SK-N-SH (cell line): ENCODE measurements at regions of chr11 and their contacts with region 1.

Region 1: DNA sequence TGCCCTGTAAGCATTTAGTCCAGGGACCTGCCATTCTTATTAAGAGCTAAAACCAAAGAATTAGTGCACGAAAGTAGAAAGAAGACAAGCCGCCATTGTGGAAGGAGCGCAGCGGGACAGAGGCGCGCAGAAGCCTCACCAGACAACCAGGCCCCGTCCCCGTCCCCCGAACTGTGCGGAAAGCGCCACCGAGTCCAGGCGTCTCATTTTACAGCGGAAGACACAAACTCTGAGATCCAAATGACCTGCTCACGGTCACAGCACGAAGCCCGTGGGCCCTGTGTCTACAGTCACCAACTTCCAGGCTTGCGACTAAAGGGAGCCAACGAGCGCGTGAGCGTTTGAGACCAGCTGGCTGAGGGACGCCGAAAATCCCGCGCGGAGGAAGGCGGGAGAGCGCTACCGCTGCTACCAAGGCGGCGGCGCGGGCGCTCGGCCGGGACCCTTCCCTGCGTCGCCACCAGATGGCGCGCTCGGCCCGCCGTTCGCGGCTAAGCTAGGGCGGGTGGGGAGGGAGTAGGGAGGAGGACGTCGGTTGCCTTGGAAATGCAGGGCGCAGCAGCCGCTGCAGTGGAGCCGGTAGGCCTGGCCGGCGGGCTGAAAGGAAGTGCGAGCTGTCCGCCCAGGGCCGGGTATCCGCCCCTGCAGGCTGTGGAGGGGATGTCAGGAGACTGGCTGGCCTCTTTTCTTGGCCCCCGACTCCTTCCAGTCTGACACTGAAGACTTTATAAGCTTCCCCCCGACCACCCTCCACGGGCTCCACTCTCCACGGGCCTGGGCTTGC is 434 bp upstream of the CCDC83 start:
- DNase-seq: peak; percentile 95
- H3K4me3 ChIP-seq: peak overlapping the region; percentile 53 to 64
- H3K27ac ChIP-seq: peak overlapping the region; percentile 57 to 76
- H3K4me1 ChIP-seq: peaks cover 0 to 8% of the 10 kb centered on the region in 2 experiments; a peak in 1 of 4 replicates
- H3K27me3 ChIP-seq: no peaks in the 10 kb centered on the region
- CTCF ChIP-seq: peak; percentile 61
- EP300 ChIP-seq: no peak
- RAD21 ChIP-seq: peak; percentile 88

Region 2: GRCh38 chr11:85843929-85844328 is 10.8 kb before region 1 on chr11:
- CTCF ChIA-PET with region 1: interaction called, 11 read pairs
- POLR2A ChIA-PET with region 1: no interaction called
- DNase-seq: no peak
- H3K4me3 ChIP-seq: no peak overlapping the region
- H3K27ac ChIP-seq: no peak overlapping the region
- H3K4me1 ChIP-seq: peaks cover 5 to 7% of the 10 kb centered on the region in 2 experiments; a peak in 1 of 4 replicates
- H3K27me3 ChIP-seq: no peaks in the 10 kb centered on the region
- CTCF ChIP-seq: no peak
- EP300 ChIP-seq: no peak
- RAD21 ChIP-seq: no peak

Region 3: DNA sequence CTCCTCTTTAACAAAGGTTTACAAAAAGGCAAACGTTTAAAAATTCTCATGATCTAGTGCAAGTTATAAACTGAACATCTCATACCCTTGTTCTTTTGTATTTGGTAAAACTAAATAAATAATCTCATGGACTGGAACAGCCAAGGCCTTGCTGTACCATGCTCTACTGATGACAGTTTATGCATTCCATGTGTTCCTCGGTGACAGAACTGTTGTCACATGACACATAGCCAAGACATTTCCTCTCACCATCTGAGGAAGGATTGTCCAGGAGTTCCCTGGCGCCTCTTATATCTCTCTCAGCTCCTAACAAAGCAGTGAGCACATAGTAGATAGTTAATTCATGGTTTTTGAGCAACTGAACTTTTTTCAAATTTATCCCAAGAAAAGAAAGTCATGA is 13.0 kb after region 1 on chr11:
- CTCF ChIA-PET with region 1: interaction called, 31 read pairs
- POLR2A ChIA-PET with region 1: no interaction called
- DNase-seq: no peak
- H3K4me3 ChIP-seq: no peak overlapping the region
- H3K27ac ChIP-seq: no peak overlapping the region
- H3K4me1 ChIP-seq: no peaks in the 10 kb centered on the region
- H3K27me3 ChIP-seq: no peaks in the 10 kb centered on the region
- CTCF ChIP-seq: no peak
- EP300 ChIP-seq: no peak
- RAD21 ChIP-seq: no peak

Region 4: GRCh38 chr11:86218125-86219084 is 363.7 kb after region 1 on chr11:
- CTCF ChIA-PET with region 1: interaction called, 24 read pairs
- POLR2A ChIA-PET with region 1: no interaction called
- DNase-seq: peak; percentile 70
- H3K4me3 ChIP-seq: peak overlapping the region in 1 of 2 experiments; percentile 28; a peak in 3 of 4 replicates
- H3K27ac ChIP-seq: no peak overlapping the region
- H3K4me1 ChIP-seq: peaks cover 0 to 5% of the 10 kb centered on the region in 2 experiments; a peak in 2 of 4 replicates
- H3K27me3 ChIP-seq: no peaks in the 10 kb centered on the region
- CTCF ChIP-seq: peak; percentile 92
- EP300 ChIP-seq: no peak
- RAD21 ChIP-seq: peak; percentile 89

Region 5: DNA sequence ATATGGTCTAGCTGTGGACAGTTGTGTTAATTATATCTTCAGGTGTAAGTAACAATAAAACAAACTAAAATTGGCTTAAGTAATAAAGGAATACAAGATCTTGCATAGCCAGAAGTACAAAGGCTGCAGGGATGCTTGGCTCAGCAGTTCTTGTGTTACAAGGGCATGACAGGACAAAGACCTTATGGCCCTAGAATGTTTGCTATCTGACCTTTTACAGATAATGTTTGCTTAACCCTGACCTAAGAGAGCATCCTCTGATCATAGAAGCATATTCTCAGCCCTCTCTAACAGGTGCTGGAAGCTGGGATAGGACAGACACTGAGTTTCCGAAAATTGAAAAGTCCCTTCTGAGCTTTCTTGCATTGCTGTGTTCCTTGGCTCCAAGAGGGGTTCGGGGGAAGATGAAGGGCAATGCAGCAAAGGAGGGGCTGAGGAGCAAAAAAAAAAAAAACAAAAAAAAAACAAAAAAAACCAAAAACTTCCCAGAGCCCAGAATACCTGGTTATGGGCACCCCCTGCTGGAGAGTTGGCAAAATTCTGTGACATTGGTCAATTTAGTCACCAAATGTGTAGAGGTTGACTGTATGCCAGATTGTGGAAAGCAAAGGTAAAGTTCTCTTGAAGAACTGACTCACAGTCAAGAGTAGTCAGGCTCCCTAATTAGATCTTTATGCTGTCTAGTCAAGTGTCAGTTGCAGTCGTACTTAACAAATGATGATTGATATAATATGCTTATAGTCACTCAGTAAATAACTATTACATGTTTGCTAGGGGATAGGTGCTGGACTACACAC is 436.9 kb after region 1 on chr11:
- CTCF ChIA-PET with region 1: interaction called, 37 read pairs
- POLR2A ChIA-PET with region 1: no interaction called
- DNase-seq: peak; percentile 46
- H3K4me3 ChIP-seq: no peak overlapping the region; a peak in 1 of 4 replicates
- H3K27ac ChIP-seq: no peak overlapping the region
- H3K4me1 ChIP-seq: no peaks in the 10 kb centered on the region
- H3K27me3 ChIP-seq: no peaks in the 10 kb centered on the region
- CTCF ChIP-seq: peak; percentile 85
- EP300 ChIP-seq: no peak
- RAD21 ChIP-seq: peak; percentile 84

Region 6: DNA sequence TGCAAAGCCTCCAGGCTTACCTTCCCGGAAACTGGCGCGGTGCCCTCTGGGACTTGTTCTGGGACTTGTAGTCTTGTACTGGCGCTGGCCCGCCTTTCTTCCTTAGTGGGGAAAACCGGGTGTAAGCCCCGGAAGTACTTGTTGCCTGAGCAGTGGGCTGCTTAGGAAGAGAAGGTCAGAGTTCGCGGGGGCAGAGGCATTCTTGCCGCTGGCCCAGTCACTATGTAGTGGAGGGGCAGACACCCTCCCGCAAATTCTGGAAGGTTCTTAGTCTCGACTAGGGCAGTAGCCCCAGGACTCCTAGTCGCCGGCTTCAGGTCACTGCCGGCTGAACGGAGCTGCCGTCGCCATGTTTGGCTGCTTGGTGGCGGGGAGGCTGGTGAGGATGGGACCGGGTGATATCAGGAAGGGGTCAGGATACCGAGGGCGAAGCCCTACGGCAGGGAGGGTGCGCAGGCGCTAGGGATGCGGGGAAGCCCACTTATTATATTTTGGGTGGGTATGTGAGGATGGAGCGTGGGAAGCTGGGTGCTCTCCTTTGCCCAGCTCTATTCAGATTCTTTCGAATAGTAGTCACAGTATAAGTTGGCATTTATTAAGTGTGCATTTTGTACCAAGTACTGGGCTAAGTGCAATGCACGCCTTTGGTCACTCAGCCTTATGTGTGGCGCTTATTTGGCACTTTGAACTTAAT is 447.5 kb after region 1 on chr11 and contains the start of gene HIKESHI:
- CTCF ChIA-PET with region 1: interaction called, 12 read pairs
- POLR2A ChIA-PET with region 1: no interaction called
- DNase-seq: peak; percentile 86
- H3K4me3 ChIP-seq: peak within 1 kb of the TSS; percentile 83 to 91
- H3K27ac ChIP-seq: peak within 1 kb of the TSS; percentile 79 to 87
- H3K4me1 ChIP-seq: peaks cover 4 to 16% of the 10 kb centered on the region in 2 experiments; a peak in 2 of 4 replicates
- H3K27me3 ChIP-seq: no peaks in the 10 kb centered on the region
- CTCF ChIP-seq: no peak
- EP300 ChIP-seq: peak in 1 of 2 experiments; percentile 54; a peak in 2 of 4 replicates
- RAD21 ChIP-seq: no peak
- polyA plus RNA-seq, gene HIKESHI: 62.3 and 67.6 TPM in 2 replicates